PC-9 (cell line): ENCODE measurements at regions of chr2 and their contacts with region 1.

Region 1: DNA sequence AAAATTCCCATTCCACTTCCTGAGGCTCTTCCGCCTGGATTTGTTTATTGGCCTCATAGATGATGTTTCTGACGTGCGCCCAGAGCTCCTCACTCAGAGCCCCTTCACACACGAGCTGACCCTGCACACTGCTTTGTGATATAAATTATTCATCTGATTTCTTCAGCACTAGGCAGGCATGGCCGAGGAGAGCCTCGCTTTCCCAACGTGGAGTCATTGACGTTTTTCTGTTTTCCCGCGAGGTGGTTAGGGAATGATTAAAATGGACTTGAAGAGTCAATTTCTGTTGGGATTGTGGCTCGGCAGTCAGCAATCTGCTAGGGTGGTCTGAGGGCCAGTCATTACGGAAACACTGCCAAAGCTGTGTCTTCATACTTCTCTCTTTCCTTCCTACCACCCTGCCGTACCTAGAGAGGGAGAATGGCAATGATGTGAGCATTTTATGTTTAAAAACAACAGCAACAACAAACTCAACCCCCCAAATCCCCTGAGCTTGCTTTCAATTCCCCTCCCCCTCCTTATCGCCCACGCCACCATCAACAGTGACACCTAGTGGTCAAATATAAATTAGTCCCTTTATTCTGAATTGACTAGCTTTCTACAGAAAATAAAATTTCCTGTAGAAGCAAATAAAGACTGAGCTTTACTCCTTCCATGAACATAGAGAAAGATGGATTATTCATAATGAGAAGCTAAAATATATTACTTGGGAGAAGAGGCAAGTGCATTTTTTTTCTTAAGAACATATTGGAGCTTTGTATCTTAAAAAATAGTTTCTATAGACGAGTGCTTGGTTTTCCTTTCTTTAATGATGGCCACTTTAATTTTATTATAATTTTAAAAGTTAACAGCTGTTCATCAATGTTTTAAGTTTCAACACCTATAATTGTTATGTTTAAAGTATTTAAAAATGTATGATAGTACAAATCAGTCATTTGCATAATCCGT is 285.1 kb downstream of the MTX2 start:
- DNase-seq: peak; percentile 53 to 54
- H3K4me3 ChIP-seq: peak overlapping the region; percentile 58
- H3K27ac ChIP-seq: no peak overlapping the region
- H3K4me1 ChIP-seq: no peaks in the 10 kb centered on the region
- H3K27me3 ChIP-seq: no peaks in the 10 kb centered on the region; the same call in 1 of the 2 replicates
- CTCF ChIP-seq: peak; percentile 100

Region 2: GRCh38 chr2:176140513-176141317 is 413.7 kb before region 1 on chr2:
- CTCF ChIA-PET with region 1: interaction called, 16 read pairs
- POLR2A ChIA-PET with region 1: no interaction called
- intact Hi-C with region 1: loop called (anchors 2 kb)
- DNase-seq: peak in 1 of 2 experiments; percentile 60
- H3K4me3 ChIP-seq: no peak overlapping the region
- H3K27ac ChIP-seq: no peak overlapping the region
- H3K4me1 ChIP-seq: no peaks in the 10 kb centered on the region
- H3K27me3 ChIP-seq: peaks cover 29% of the 10 kb centered on the region; the same call in 1 of the 2 replicates
- CTCF ChIP-seq: peak; percentile 44

Region 3: GRCh38 chr2:176321916-176322315 is 232.5 kb before region 1 on chr2:
- CTCF ChIA-PET with region 1: no interaction called
- POLR2A ChIA-PET with region 1: no interaction called
- intact Hi-C with region 1: no loop called
- DNase-seq: no peak
- H3K4me3 ChIP-seq: no peak overlapping the region
- H3K27ac ChIP-seq: no peak overlapping the region
- H3K4me1 ChIP-seq: no peaks in the 10 kb centered on the region
- H3K27me3 ChIP-seq: no peaks in the 10 kb centered on the region
- CTCF ChIP-seq: no peak

Region 4: GRCh38 chr2:176333685-176334084 is 220.7 kb before region 1 on chr2:
- CTCF ChIA-PET with region 1: interaction called, 6 read pairs
- POLR2A ChIA-PET with region 1: no interaction called
- intact Hi-C with region 1: loop called (anchors 10 kb)
- DNase-seq: no peak
- H3K4me3 ChIP-seq: no peak overlapping the region
- H3K27ac ChIP-seq: no peak overlapping the region
- H3K4me1 ChIP-seq: no peaks in the 10 kb centered on the region
- H3K27me3 ChIP-seq: no peaks in the 10 kb centered on the region
- CTCF ChIP-seq: no peak

Region 5: GRCh38 chr2:176491172-176491904 is 63.0 kb before region 1 on chr2:
- CTCF ChIA-PET with region 1: no interaction called
- POLR2A ChIA-PET with region 1: no interaction called
- intact Hi-C with region 1: loop called (anchors 1 kb)
- DNase-seq: peak; percentile 60 to 78
- H3K4me3 ChIP-seq: no peak overlapping the region
- H3K27ac ChIP-seq: no peak overlapping the region
- H3K4me1 ChIP-seq: no peaks in the 10 kb centered on the region
- H3K27me3 ChIP-seq: peaks cover 8% of the 10 kb centered on the region; the same call in 1 of the 2 replicates
- CTCF ChIP-seq: no peak

Region 6: DNA sequence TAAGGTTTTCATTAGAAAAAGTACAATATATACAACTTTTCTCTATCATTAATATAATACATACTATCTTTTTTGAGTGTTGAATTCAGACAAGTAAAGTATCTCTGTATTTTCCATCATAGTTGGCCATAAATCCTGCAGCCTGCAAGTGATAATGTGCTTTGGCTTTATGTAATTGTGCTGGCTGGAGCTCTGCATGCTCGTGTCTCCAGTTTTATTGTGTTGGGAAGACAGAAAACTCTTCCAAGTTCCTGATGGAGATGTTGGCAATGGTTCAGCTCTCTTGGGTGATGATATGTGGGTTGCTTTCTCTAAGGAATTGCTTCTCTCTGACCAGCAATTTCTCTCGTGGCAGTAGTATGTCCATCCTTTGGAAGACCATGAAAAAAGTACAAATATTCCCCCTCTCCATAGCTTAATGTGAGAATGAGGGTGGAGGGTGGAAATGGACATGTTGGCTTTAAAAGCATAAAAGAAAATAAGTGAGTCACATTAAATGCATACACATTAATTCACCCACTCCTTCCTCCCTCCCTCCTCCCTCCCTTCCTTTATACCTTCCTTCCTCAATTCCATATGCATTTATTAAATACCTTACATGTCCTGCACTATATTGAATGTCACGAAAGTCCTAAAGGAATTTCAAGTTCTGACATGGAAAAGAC is 59.1 kb after region 1 on chr2:
- CTCF ChIA-PET with region 1: interaction called, 11 read pairs
- POLR2A ChIA-PET with region 1: interaction called, 4 read pairs
- intact Hi-C with region 1: no loop called
- DNase-seq: no peak
- H3K4me3 ChIP-seq: no peak overlapping the region
- H3K27ac ChIP-seq: no peak overlapping the region
- H3K4me1 ChIP-seq: peaks cover 14% of the 10 kb centered on the region
- H3K27me3 ChIP-seq: no peaks in the 10 kb centered on the region
- CTCF ChIP-seq: no peak

Region 7: DNA sequence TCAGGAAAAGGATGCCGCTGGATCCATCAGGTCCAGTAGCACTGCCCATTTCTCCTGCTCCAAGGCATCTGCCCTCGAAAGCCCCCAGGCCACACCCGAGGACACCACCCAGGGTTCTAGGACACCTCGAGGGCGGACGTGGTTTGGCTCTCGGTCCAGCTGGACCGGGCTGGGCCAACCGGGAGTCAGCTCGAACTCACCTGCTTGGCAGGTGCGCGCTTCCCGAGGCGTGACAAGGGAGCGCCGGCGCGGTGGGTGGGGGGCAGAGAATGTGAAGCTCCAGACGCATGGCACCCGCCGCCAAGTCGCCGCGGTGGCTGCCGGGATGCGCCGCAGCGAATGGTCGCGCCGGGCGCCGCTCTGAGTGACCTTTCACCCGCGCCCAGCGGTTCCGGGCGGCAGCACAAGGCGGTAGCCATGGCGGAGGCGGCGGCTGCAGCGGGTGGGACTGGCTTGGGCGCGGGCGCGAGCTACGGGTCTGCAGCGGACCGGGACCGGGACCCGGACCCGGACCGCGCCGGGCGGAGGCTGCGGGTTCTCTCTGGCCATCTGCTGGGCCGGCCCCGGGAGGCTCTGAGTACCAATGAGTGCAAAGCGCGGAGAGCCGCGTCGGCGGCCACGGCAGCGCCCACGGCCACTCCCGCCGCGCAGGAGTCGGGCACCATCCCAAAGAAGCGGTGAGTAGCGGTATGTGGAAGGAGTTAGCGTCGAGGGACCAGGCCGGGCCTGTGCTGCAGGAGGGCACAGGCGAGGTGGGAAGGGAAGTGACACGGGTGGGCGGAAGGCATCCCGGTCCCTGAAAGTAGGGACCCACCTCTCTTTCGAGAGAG is 838.2 kb after region 1 on chr2 and contains the start of gene AGPS:
- CTCF ChIA-PET with region 1: no interaction called
- POLR2A ChIA-PET with region 1: no interaction called
- intact Hi-C with region 1: no loop called
- DNase-seq: peak; percentile 76 to 91
- H3K4me3 ChIP-seq: peak within 1 kb of the TSS; percentile 94
- H3K27ac ChIP-seq: peak within 1 kb of the TSS; percentile 62
- H3K4me1 ChIP-seq: peaks cover 54% of the 10 kb centered on the region
- H3K27me3 ChIP-seq: no peaks in the 10 kb centered on the region
- CTCF ChIP-seq: no peak
- total RNA-seq, gene AGPS: 101 and 107 TPM in 2 replicates